Right ventricle myocardium inferior (tissue), 1 donor: ENCODE measurements at regions of chrX and their contacts with region 1.

Region 1: DNA sequence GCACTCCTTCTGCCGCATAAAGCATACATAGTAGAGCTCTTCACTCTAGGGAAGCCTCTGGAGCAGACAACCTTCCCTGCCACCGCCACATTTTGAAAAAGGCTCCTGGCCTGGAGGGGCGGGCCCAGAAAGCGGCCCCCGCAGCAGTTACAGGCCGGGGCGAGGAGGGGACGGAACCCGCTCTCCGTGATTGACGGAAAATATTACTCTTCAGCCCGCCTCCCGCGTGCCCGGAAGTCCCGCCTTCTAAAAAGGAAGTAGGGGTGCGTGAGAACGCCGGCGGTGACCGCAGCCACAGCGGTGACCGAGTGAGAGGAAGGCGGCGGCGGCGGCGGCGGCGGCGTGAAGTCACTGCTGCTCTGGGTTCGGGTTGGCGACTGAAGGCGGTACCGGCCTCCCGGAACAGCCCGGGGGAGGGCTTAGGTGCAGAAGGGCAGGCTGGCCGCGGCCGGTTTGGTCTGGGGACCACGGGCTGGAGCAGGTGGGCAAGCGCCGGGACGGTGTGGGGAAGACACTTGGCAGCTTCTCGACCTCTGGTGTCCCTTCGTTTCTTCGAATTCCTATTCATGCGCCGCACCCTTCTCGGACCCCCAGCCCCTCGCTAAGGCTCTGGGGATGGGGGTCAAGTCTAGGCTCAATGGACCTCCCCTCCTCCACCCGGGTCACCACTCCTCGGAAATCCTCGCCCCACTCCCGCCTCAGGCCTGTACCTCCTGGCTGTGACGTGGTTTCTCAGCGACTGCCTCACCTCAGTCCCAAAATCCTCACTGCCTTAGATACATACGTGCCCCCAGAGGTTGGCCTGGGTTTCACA is at the start of gene HCCS:
- DNase-seq: peak; percentile 94
- ATAC-seq: peak; percentile 96
- total RNA-seq, gene HCCS: 50.8 TPM

Region 2: GRCh38 chrX:10965174-10965798 is 146.0 kb before region 1 on chrX:
- intact Hi-C with region 1: no loop called
- DNase-seq: no peak
- ATAC-seq: no peak

Region 3: DNA sequence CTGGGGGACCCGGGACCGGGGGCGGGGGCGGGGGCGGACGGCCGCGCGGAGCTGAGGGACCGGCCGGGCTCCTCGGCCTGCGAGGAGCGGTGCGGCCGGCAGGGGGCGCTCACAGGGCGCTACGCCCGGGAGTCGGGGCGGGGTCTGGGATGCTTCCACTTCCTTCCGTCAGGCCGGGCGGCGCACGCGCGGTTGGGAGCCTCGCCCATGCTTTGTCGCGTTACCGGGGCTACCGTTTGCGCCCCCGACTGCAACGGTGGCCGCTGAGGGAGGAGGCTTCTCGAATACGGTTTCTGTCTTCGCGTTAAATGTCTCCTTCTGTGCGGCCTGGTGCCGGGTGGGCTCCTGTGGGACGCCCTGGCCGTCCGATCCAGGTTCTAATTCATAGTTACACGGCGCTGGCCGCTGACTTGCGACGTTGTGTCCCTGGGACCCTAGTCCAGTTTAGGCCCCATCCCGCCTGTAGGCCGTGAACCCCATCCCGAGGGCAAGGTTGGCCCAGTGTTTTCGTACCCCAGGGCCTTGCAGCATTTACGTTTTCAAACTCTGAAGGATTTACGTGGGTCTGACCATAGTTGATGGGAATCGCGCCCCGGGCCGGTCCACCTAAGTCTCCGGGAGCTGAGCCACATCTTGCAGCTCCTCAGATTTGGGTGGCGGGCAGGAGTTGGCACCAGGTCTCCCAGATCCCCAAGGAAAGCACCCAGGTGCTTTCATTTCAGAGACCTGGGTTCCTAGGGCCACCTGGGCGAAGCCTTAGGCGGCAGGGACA is 647.3 kb after region 1 on chrX:
- intact Hi-C with region 1: loop called (anchors 10 kb)
- DNase-seq: peak; percentile 95
- ATAC-seq: peak; percentile 89